ENCODE measurements at regions of chr15 and their contacts with region 1.

Region 1: DNA sequence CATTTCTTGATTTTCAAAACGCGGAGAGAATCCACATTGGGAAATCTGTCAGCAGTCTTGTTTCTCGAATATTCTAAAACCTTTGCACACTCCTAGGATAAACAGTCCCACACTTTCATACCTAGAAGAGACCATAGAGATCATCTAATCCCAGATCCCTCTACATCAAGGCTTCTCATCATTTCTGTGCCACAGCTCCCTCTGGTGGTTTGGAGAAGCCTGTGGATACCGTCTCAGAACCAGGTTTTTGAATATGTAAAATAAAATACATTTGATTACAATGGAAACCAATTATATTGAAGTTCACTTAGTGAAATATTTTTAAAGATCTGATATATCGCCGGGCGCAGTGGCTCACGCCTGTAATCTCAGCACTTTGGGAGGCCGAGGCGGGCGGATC is 211.9 kb upstream of the GOLGA6L4 start:
- DNase-seq: peak; percentile 37
- H3K4me3 ChIP-seq: no peak overlapping the region
- H3K27ac ChIP-seq: no peak overlapping the region
- H3K4me1 ChIP-seq: no peaks in the 10 kb centered on the region
- CTCF ChIP-seq: peak; percentile 81

Region 2: DNA sequence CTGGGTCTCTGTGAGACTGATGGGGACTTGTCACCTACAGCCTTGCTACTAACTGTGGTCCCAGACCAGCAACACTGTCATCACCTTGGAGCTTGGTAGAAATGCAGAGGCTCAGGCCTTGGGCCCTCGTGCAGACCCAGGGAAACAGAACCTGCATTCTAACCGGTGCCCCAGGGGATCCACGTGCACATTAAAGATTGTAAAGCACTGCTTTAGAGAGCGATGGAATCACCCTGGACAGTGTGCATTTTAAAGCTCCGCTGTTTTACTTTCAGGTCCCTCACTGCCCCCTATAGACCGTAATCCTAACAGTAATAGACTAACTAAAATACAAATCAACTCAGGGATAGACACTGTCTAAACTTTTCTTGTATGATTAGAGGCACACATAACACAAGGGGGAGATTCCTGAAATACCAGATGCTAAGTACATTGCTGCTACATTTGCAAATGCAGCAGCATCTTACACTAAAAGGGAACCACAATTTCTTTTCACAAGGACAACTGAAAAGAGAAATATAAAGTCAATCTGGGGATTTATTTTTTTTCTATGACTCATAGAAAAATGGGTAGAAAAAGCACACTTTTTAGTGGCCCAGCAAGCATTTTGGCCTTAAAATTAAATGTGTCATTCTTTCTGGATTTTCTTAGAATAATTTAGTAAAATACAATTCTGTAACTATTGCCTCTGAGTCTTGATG is 587.0 kb before region 1 on chr15:
- CTCF ChIA-PET with region 1: no interaction called
- POLR2A ChIA-PET with region 1: no interaction called
- intact Hi-C with region 1: loop called (anchors 5 kb)
- DNase-seq: peak; percentile 2
- H3K4me3 ChIP-seq: no peak overlapping the region
- H3K27ac ChIP-seq: no peak overlapping the region
- H3K4me1 ChIP-seq: no peaks in the 10 kb centered on the region
- CTCF ChIP-seq: peak; percentile 68

Region 3: GRCh38 chr15:83567318-83567717 is 456.3 kb before region 1 on chr15:
- CTCF ChIA-PET with region 1: no interaction called
- POLR2A ChIA-PET with region 1: no interaction called
- intact Hi-C with region 1: loop called (anchors 5 kb)
- DNase-seq: peak; percentile 24
- H3K4me3 ChIP-seq: no peak overlapping the region
- H3K27ac ChIP-seq: no peak overlapping the region
- H3K4me1 ChIP-seq: no peaks in the 10 kb centered on the region
- CTCF ChIP-seq: no peak

Region 4: DNA sequence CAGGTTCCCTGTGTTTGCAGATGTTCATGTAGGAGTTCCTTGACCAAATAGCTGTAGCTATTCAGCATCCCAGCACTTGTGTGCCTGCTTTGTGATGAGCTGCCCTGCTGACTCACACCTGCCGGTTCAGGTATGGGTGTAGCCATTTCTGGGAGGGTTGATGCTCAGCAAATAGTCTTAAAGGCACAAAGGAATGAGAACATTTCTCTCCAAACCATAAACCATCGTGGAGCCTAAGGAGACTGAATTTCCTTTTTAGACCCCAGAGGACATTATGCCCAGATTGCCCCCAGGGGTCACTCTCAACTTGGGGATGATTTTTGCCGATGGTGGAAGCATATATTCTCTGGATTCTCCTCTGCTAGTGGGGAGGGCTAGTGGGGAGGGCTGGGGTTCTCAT is 289.1 kb before region 1 on chr15:
- CTCF ChIA-PET with region 1: no interaction called
- POLR2A ChIA-PET with region 1: no interaction called
- intact Hi-C with region 1: loop called (anchors 10 kb)
- DNase-seq: no peak
- H3K4me3 ChIP-seq: no peak overlapping the region
- H3K27ac ChIP-seq: no peak overlapping the region
- H3K4me1 ChIP-seq: no peaks in the 10 kb centered on the region
- CTCF ChIP-seq: 0 out of 2 replicates have a peak, but pooled peaks have one; percentile 25

Measured in OCI-LY7 (cell line).